Activated CD4-positive, alpha-beta T cell treated with anti-CD3 and anti-CD28 coated beads for 36 hours (primary cell): ENCODE measurements at regions of chr3 and their contacts with region 1.

Region 1: DNA sequence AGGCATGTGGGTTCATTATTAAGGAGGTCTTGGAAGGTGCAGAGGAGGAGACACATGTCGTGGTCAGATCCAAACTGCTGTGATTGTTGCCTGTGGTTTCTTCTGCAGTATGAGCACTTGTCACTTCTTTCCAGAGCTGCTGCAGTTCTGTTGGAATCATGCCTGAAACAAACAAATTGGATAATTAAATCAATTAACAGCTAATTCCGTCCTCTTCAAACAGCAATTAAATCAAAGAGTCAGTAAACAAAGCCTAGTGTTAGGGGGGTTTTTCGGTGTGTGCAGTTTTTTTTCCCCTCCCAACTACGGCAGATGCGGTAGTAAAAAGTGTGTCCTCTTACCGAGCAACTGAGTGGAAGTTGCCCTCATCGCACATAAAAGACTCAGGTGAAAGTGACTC is 542.2 kb downstream of the FOXP1 start:
- DNase-seq: no peak
- ATAC-seq: no peak
- H3K4me3 Mint-ChIP-seq: no peak overlapping the region
- H3K27ac Mint-ChIP-seq: peak overlapping the region; percentile 62
- H3K4me1 Mint-ChIP-seq: peaks cover 86% of the 10 kb centered on the region
- H3K27me3 Mint-ChIP-seq: no peaks in the 10 kb centered on the region

Region 2: DNA sequence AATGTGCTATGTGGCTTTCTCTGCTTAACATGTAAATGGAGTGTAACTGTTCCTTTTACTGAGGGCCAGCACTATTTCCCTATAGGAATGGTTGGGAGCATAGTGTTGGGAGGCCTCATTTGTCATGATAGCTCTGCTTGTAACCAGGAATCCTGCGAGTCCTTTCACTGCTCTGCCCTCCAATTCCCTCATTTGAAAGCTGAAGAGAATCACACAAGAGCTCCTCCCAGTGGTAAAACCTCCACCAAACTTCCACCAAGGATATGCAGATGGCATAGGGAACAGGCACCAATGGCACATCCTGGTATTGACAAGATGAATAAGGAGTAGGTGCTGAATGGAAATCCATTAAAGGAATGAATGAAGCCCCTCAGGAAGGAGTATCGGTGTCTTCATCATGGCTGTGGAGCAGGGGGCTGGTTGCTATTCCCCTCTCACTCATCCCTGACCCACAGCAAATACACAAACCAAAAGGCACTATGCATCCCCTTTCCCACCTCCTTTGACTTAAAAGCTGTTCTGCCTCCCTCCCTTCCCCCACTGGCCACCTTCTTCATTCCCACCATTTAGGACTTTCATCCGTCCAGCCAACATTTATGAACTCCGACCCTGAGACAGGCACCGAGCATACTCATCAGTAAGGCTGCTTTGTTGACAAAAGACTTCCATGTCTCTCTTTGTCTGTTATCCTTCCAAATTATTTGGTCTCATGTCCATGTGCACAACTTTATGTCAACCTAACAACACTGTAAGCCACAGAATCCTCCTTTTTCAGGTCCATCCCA is 18.6 kb before region 1 on chr3:
- CTCF ChIA-PET with region 1: interaction called, 5 read pairs
- POLR2A ChIA-PET with region 1: no interaction called
- intact Hi-C with region 1: loop called in 1 of 2 experiments (anchors 2 kb)
- DNase-seq: no peak
- ATAC-seq: no peak
- H3K4me3 Mint-ChIP-seq: no peak overlapping the region
- H3K27ac Mint-ChIP-seq: peak overlapping the region; percentile 55
- H3K4me1 Mint-ChIP-seq: peaks cover 82% of the 10 kb centered on the region
- H3K27me3 Mint-ChIP-seq: no peaks in the 10 kb centered on the region